Activated T-helper 1 cell treated with anti-CD3 and anti-CD28 coated beads, Interleukin-12 subunit alpha, Interleukin-12 subunit beta, Interleukin-2, Interleukin-4 antibody, amounts not matched to agents 30 ng/mL and 10 ng/mL and 1 ng/mL, durations not matched to agents 14 hours and 24 hours and 36 hours (primary cell): ENCODE measurements at regions of chr5 and their contacts with region 1.

Region 1: GRCh38 chr5:143968011-143968878 is 156.3 kb downstream of the HMHB1 start:
- DNase-seq: no peak
- H3K4me3 Mint-ChIP-seq: no peak overlapping the region
- H3K27ac Mint-ChIP-seq: no peak overlapping the region
- H3K4me1 Mint-ChIP-seq: no peaks in the 10 kb centered on the region
- H3K27me3 Mint-ChIP-seq: peaks cover 17% of the 10 kb centered on the region

Region 2: GRCh38 chr5:142922223-142922952 is 1045.9 kb before region 1 on chr5:
- intact Hi-C with region 1: loop called (anchors 2 kb)
- DNase-seq: no peak
- H3K4me3 Mint-ChIP-seq: no peak overlapping the region
- H3K27ac Mint-ChIP-seq: no peak overlapping the region
- H3K4me1 Mint-ChIP-seq: peaks cover 49% of the 10 kb centered on the region
- H3K27me3 Mint-ChIP-seq: no peaks in the 10 kb centered on the region

Region 3: DNA sequence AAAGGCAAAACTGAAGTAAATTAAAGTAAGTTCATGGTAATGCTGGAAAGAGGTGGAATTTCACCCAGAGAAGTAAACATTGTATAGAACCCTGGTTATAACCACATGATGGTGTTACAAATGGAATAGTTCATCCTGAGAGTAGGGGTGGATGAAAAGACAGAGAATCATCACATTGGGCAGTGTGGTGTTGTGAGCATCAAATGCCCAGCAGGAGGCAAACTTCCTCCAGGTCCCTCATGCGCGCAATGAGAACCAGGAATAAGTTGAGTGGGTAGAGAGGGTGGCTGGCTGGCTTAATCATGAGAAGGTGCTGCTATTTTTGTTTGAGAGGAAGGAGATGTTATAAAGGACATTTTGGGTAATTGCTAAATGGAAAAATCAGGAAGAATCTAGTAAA is 319.5 kb before region 1 on chr5:
- intact Hi-C with region 1: loop called (anchors 2 kb)
- DNase-seq: no peak
- H3K4me3 Mint-ChIP-seq: no peak overlapping the region
- H3K27ac Mint-ChIP-seq: no peak overlapping the region
- H3K4me1 Mint-ChIP-seq: peaks cover 6% of the 10 kb centered on the region
- H3K27me3 Mint-ChIP-seq: no peaks in the 10 kb centered on the region

Region 4: GRCh38 chr5:144183254-144183889 is 215.1 kb after region 1 on chr5:
- intact Hi-C with region 1: loop called (anchors 2 kb)
- DNase-seq: no peak
- H3K4me3 Mint-ChIP-seq: no peak overlapping the region
- H3K27ac Mint-ChIP-seq: no peak overlapping the region
- H3K4me1 Mint-ChIP-seq: peaks cover 53% of the 10 kb centered on the region
- H3K27me3 Mint-ChIP-seq: no peaks in the 10 kb centered on the region